ENCODE measurements at regions of chr2 and their contacts with region 1.

Region 1: GRCh38 chr2:222613715-222614331 is 42.1 kb downstream of the FARSB start:
- DNase-seq: peak in 1 of 2 experiments; percentile 63
- H3K4me3 ChIP-seq: no peak overlapping the region
- H3K4me3 Mint-ChIP-seq: no peak overlapping the region
- H3K27ac Mint-ChIP-seq: no peak overlapping the region
- H3K4me1 ChIP-seq: no peaks in the 10 kb centered on the region
- H3K4me1 Mint-ChIP-seq: no peaks in the 10 kb centered on the region
- H3K27me3 ChIP-seq: no peaks in the 10 kb centered on the region
- H3K27me3 Mint-ChIP-seq: no peaks in the 10 kb centered on the region
- CTCF ChIP-seq: peak; percentile 88 to 91

Region 2: DNA sequence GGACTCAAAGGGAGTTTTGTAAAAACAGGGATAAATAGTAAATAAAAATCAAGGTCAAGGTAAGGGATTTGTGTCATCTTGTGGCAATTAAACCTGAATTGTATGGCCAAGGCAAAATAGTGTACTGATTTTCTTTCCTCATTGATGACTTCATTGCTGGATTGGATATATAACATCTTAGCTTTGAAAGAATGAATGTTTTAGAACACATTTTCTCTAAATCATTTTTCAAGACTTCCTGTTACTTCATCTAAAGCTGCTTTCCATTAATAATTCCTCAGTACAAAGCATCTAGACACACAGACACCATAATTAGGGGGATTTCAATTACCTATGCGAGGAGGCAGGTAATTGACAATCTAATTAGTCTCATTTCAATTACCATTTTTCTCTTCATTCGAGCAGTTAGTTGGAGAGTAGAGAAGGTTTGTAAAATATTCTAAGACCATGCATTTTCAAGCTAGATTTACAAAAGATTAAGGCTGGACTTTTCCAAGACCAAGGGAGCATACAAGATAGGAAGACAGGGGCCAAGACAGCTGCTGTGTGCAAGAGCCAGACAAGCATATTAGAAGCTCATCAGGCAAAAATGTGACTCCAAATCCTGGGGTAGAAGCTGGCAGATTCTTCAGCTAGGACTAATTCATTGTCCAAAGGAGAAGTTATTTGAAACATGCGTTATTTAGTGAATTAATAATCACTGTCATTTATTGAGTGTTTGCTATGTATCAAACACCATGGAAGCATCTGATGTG is 1295.3 kb before region 1 on chr2:
- CTCF ChIA-PET with region 1: no interaction called
- POLR2A ChIA-PET with region 1: no interaction called
- intact Hi-C with region 1: no loop called
- DNase-seq: no peak
- H3K4me3 ChIP-seq: no peak overlapping the region
- H3K4me3 Mint-ChIP-seq: no peak overlapping the region
- H3K27ac Mint-ChIP-seq: no peak overlapping the region
- H3K4me1 ChIP-seq: no peaks in the 10 kb centered on the region
- H3K4me1 Mint-ChIP-seq: peaks cover 7% of the 10 kb centered on the region
- H3K27me3 ChIP-seq: no peaks in the 10 kb centered on the region
- H3K27me3 Mint-ChIP-seq: no peaks in the 10 kb centered on the region
- CTCF ChIP-seq: no peak

Region 3: DNA sequence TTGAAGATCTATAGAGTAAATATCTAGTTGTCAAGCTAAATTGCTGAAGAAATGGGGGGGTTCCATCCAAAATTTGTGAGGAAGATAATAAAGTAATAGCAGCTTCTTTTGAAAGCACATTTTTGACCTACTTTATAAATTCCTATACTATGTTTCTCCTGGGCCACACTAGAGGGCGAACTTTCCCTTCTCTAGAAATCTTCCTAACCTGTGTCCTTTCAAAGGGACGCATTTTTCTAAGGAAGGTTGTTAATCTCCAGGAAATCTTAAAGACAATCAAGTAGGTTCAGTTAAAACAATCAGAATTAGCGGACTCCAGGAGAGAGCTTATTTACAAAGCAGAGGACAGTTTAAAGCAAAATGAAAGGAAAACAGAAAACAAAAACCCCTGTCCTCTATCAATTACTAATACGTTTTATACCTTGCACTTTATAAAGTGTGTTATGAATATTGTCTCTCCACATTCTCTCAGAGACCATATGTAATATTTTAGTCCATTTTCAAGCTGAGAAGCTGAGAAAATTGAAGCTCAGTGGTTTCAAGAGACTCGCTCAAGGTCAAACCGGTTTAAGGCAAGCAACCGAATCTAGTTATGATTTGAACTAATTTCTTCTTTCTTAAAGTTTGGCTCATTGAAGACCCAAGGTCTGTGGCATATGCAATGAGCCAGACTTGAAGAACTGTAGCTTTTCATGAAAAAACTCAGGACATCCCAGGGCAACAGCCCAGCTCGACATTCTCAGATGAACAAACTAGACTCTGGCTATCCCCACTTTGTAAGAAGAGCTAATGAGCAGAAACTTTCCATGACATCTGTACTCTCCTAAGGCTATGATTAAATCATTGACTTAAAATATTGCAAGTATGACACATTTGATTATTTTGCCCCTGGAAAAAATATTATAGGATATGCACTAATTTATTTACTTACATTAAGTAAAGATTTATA is 588.6 kb before region 1 on chr2:
- CTCF ChIA-PET with region 1: no interaction called
- POLR2A ChIA-PET with region 1: no interaction called
- intact Hi-C with region 1: loop called (anchors 1 kb)
- DNase-seq: peak in 1 of 2 experiments; percentile 32
- H3K4me3 ChIP-seq: no peak overlapping the region
- H3K4me3 Mint-ChIP-seq: no peak overlapping the region
- H3K27ac Mint-ChIP-seq: no peak overlapping the region
- H3K4me1 ChIP-seq: no peaks in the 10 kb centered on the region; the same call in 1 of the 2 replicates
- H3K4me1 Mint-ChIP-seq: no peaks in the 10 kb centered on the region
- H3K27me3 ChIP-seq: no peaks in the 10 kb centered on the region
- H3K27me3 Mint-ChIP-seq: no peaks in the 10 kb centered on the region
- CTCF ChIP-seq: peak; percentile 63 to 90

Region 4: GRCh38 chr2:222057347-222058073 is 556.3 kb before region 1 on chr2:
- CTCF ChIA-PET with region 1: interaction called, 4 read pairs
- POLR2A ChIA-PET with region 1: no interaction called
- intact Hi-C with region 1: loop called (anchors 1 kb)
- DNase-seq: no peak
- H3K4me3 ChIP-seq: no peak overlapping the region
- H3K4me3 Mint-ChIP-seq: no peak overlapping the region
- H3K27ac Mint-ChIP-seq: no peak overlapping the region
- H3K4me1 ChIP-seq: no peaks in the 10 kb centered on the region
- H3K4me1 Mint-ChIP-seq: no peaks in the 10 kb centered on the region
- H3K27me3 ChIP-seq: peaks cover 4% of the 10 kb centered on the region; the same call in 1 of the 2 replicates
- H3K27me3 Mint-ChIP-seq: peaks cover 28% of the 10 kb centered on the region
- CTCF ChIP-seq: peak; percentile 72 to 83